Stomach (tissue), 19 donors: ENCODE measurements at regions of chr22 and their contacts with region 1.

Region 1: DNA sequence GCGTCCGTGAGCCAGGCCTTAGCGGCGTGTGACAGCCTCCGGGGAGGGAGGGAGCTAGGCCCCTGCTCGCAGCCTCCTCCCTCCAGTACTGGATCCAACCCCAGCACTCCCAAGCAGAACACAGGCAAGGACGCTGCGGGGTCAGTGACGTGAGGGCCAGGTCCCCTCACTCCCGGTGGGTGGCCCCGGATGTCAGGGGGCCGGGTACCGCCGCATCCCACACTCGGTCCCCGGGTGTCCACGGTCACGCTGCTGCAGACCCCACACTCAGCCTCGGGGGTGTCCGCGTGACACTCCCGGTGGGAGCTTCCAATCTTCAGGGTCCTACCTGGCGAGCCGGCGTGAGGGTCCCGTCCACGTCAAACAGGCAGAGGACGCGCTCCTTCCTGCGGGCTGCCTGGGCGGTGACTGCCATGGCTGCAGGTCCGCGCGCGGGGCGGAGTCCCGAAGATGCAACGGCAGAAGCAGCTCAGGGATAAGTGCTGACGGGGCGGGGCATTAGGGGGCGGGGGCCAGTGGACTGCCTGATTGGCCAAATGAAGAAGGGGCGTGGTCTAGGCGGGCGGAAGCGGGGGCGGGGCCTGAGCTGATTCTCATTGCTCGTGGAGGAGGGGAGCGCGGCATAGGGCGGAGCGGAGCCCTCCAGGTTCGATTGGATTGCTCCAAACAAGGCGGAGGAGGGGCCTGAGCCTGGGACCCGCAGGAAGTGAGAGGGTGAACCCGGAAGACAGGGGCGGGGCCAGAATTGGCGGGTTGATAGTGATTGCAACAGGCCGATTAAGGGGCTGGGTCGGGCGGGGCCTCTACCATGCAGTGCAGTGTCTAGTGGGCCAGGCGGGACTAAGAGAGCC is at the start of gene PMM1:
- DNase-seq: peak; percentile 100
- H3K4me3 ChIP-seq: peak within 1 kb of the TSS; percentile 75 to 91 (median 84)
- H3K27ac ChIP-seq: peak within 1 kb of the TSS; percentile 83 to 93 (median 91)
- H3K4me1 ChIP-seq: peaks cover 15 to 55% (median 42%) of the 10 kb centered on the region in 4 donors
- H3K27me3 ChIP-seq: no peaks in the 10 kb centered on the region
- CTCF ChIP-seq: no peak
- EP300 ChIP-seq: no peak
- POLR2A ChIP-seq: peak in 2 of 4 donors; percentile 60 to 88
- total RNA-seq, gene PMM1: 15.2 to 131 (median 41.9) TPM

Region 2: DNA sequence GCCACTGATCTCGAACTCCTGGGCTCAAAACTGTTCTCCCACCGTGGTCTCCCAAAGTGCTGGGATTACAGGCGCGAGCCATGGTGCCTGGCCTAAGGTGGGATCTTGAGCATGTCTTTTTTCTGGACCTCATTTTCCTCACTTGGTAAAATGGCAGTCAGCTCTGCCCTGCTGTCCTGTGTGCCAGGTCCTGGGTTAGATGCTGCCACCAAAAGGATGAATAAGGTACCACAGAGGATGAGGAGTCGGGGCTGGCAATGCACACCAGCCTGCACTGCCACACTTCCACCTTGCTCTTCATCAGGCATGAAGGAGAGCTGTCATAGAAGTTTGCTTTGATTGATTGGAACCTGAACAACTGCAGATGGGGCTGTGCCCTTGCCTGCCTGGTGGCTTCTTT is 88.4 kb before region 1 on chr22:
- intact Hi-C with region 1: no loop called
- DNase-seq: no peak
- H3K4me3 ChIP-seq: no peak overlapping the region
- H3K27ac ChIP-seq: peak overlapping the region in 1 of 5 donors; percentile 46
- H3K4me1 ChIP-seq: peaks cover 0 to 17% (median 11%) of the 10 kb centered on the region in 4 donors
- H3K27me3 ChIP-seq: no peaks in the 10 kb centered on the region
- CTCF ChIP-seq: peak in 1 of 7 experiments; percentile 11
- EP300 ChIP-seq: no peak
- POLR2A ChIP-seq: no peak

Region 3: DNA sequence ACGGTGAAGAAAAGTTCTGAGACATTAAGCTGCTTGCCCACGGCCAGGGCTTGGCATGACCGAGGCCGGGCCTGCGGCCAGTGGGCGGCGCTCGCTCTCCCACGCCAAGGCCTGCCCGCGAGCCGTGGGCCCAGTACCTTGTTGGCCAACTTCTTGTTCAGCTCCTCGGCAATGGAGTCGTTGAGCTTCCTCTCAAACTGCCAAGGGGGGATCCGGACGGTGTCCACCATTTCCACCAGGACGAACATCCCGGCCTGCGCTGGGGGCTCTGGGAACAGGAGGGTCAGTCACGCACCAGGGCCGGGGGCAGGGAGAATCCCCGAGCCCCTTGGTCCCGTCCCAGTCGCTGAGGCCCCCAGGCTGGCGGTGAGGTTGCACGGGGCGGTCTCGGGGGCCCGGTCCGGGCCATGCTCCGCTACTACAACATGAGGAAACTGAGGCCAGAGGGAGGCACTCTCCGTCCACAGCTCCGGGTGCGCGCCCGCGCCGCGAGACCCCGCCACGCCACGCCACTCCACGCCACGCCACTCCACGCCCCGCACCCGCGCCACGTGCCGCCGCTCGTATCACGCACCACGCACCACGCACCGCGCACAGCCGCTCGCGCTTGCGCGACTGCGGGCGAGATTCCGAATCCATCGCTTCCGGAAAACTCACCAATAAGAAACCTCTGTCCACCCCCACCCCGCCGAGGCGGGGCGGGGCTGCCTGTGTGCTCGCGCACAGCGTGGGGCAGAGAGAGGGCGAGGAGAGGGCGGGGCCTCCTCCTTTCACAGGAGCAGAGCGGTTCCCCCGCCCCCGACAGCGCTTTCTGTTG is 45.6 kb before region 1 on chr22 and contains the start of gene POLR3H:
- intact Hi-C with region 1: loop called (anchors 10 kb)
- DNase-seq: peak; percentile 99
- H3K4me3 ChIP-seq: peak within 1 kb of the TSS; percentile 72 to 97 (median 83)
- H3K27ac ChIP-seq: peak within 1 kb of the TSS; percentile 77 to 92 (median 90)
- H3K4me1 ChIP-seq: peaks cover 11 to 51% (median 39%) of the 10 kb centered on the region in 4 donors
- H3K27me3 ChIP-seq: no peaks in the 10 kb centered on the region
- CTCF ChIP-seq: peak in 5 of 7 experiments; percentile 33 to 65 (median 45)
- EP300 ChIP-seq: no peak
- POLR2A ChIP-seq: no peak
- total RNA-seq, gene POLR3H: 2.6 to 13.4 (median 7.1) TPM